ENCODE measurements at regions of chr19 and their contacts with region 1.

Region 1: DNA sequence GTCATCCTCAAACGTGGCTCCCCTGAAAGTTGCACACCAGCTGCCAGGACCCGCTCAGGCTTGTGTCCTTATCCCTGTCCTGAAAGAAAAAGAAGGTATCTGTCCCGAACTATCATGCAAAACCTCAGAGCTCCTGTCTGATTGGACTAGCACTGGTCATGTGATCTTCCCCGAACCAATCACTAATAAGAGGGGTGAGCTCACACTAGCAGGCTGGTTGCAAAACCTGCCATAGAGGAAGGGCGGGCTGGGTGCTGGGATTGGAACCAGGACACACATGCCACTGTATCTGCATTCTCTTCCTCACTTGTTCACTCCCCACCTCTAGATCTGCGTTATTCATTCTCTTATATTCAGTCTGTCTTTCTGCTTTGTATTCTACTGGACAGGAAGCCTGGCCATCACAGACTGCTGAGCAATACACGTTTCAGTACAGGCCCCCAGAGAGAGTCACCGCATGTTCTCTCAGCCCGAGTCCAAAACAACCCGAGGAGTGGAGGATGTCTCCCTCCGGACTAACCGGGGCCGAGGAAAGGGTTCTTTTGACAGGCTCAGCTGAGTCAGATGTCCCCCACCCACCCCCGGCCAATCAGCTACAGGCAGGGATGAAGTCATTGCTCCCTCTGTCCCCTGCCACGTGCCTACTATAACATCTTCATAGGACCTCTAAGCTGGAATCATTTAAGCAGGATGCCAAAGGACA is 97.7 kb downstream of the SIPA1L3 start:
- DNase-seq: peak in 1 of 2 experiments; percentile 78
- H3K4me3 ChIP-seq: peak overlapping the region; percentile 31 to 50 (median 40); a peak in 6 of 8 replicates
- H3K27ac ChIP-seq: peak overlapping the region; percentile 87
- H3K4me1 ChIP-seq: peaks cover 13 to 27% (median 22%) of the 10 kb centered on the region in 4 experiments
- H3K27me3 ChIP-seq: no peaks in the 10 kb centered on the region
- CTCF ChIP-seq: no peak
- EP300 ChIP-seq: no peak
- POLR2A ChIP-seq: peak; percentile 90 to 97
- RAD21 ChIP-seq: no peak

Region 2: GRCh38 chr19:37931881-37932655 is 72.6 kb before region 1 on chr19:
- CTCF ChIA-PET with region 1: interaction called, 3 read pairs
- POLR2A ChIA-PET with region 1: interaction called, 25 read pairs
- DNase-seq: peak; percentile 70 to 78
- H3K4me3 ChIP-seq: peak overlapping the region; percentile 21 to 52 (median 28); a peak in 7 of 8 replicates
- H3K27ac ChIP-seq: peak overlapping the region; percentile 91
- H3K4me1 ChIP-seq: peaks cover 25 to 39% (median 33%) of the 10 kb centered on the region in 4 experiments
- H3K27me3 ChIP-seq: no peaks in the 10 kb centered on the region
- CTCF ChIP-seq: no peak
- EP300 ChIP-seq: peak in 1 of 2 experiments; percentile 32; a peak in 1 of 3 replicates
- POLR2A ChIP-seq: 0 out of 3 replicates have a peak, but pooled peaks of 1 of the 2 experiments have one; percentile 51
- RAD21 ChIP-seq: peak in 1 of 2 experiments; percentile 16; a peak in 1 of 4 replicates

Region 3: GRCh38 chr19:37992761-37993160 is 11.9 kb before region 1 on chr19:
- CTCF ChIA-PET with region 1: interaction called, 15 read pairs
- POLR2A ChIA-PET with region 1: interaction called, 66 read pairs
- DNase-seq: no peak
- H3K4me3 ChIP-seq: no peak overlapping the region
- H3K27ac ChIP-seq: no peak overlapping the region
- H3K4me1 ChIP-seq: peaks cover 9 to 30% (median 20%) of the 10 kb centered on the region in 4 experiments
- H3K27me3 ChIP-seq: no peaks in the 10 kb centered on the region
- CTCF ChIP-seq: no peak
- EP300 ChIP-seq: no peak
- POLR2A ChIP-seq: no peak
- RAD21 ChIP-seq: no peak

Region 4: GRCh38 chr19:38022791-38023670 is 18.4 kb after region 1 on chr19:
- CTCF ChIA-PET with region 1: interaction called, 6 read pairs
- POLR2A ChIA-PET with region 1: interaction called, 21 read pairs
- DNase-seq: no peak
- H3K4me3 ChIP-seq: no peak overlapping the region
- H3K27ac ChIP-seq: no peak overlapping the region
- H3K4me1 ChIP-seq: peaks cover 0 to 13% (median 6%) of the 10 kb centered on the region in 4 experiments; a peak in 5 of 7 replicates
- H3K27me3 ChIP-seq: no peaks in the 10 kb centered on the region
- CTCF ChIP-seq: no peak
- EP300 ChIP-seq: no peak
- POLR2A ChIP-seq: no peak
- RAD21 ChIP-seq: no peak

Region 5: DNA sequence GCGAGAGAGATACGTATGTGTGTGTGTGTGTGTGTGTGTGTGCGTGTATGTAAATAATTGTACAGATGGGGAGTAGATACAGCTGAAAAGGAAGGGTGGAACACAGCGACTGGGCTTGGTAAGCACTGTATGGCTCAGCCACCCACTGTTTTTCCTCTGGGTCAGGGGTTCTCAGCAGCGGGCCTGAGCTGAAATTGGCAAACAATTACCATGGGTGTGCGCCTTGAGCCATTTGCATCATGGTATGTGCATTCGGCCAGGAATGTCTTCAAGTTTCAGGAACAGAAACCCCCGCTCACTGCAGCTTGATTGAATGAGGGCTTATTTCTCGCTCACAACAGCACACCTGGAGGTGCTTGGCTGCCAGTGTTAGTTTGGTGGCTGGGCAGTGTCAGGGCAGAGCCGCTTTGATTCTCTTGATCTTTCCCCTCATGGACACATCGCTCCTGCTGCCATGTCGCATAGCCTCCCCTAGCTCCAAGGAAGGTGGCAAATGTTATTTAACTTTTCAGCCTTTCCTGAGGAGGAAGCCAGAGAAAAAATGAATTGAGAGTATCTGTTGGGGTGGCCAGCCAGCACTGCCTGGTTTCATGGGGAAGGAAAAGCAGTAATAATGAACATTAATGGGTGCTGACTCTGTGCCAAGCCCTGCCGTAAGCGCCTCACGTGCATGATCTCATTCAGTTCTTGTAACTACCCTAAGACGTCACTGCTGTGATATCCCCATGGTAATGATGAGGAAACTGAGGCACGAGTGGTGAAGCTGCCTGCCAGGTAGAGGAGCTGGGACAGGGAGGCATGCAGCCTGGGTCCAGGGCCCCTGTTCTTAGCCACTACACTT is 29.2 kb after region 1 on chr19:
- CTCF ChIA-PET with region 1: interaction called, 3 read pairs
- POLR2A ChIA-PET with region 1: interaction called, 26 read pairs
- DNase-seq: peak in 1 of 2 experiments; percentile 25
- H3K4me3 ChIP-seq: no peak overlapping the region
- H3K27ac ChIP-seq: peak overlapping the region; percentile 16; the same call in 1 of the 2 replicates
- H3K4me1 ChIP-seq: peaks cover 7 to 19% (median 14%) of the 10 kb centered on the region in 4 experiments
- H3K27me3 ChIP-seq: no peaks in the 10 kb centered on the region
- CTCF ChIP-seq: peak; percentile 32 to 55 (median 41)
- EP300 ChIP-seq: no peak
- POLR2A ChIP-seq: no peak
- RAD21 ChIP-seq: peak; percentile 40 to 48; a peak in 3 of 4 replicates

Region 6: GRCh38 chr19:38115271-38115802 is 110.7 kb after region 1 on chr19:
- CTCF ChIA-PET with region 1: no interaction called
- POLR2A ChIA-PET with region 1: no interaction called
- DNase-seq: no peak
- H3K4me3 ChIP-seq: no peak overlapping the region
- H3K27ac ChIP-seq: no peak overlapping the region
- H3K4me1 ChIP-seq: no peaks in the 10 kb centered on the region
- H3K27me3 ChIP-seq: no peaks in the 10 kb centered on the region; a peak in 1 of 7 replicates
- CTCF ChIP-seq: no peak
- EP300 ChIP-seq: no peak
- POLR2A ChIP-seq: no peak
- RAD21 ChIP-seq: no peak